ENCODE measurements at regions of chr22 and their contacts with region 1.

Region 1: DNA sequence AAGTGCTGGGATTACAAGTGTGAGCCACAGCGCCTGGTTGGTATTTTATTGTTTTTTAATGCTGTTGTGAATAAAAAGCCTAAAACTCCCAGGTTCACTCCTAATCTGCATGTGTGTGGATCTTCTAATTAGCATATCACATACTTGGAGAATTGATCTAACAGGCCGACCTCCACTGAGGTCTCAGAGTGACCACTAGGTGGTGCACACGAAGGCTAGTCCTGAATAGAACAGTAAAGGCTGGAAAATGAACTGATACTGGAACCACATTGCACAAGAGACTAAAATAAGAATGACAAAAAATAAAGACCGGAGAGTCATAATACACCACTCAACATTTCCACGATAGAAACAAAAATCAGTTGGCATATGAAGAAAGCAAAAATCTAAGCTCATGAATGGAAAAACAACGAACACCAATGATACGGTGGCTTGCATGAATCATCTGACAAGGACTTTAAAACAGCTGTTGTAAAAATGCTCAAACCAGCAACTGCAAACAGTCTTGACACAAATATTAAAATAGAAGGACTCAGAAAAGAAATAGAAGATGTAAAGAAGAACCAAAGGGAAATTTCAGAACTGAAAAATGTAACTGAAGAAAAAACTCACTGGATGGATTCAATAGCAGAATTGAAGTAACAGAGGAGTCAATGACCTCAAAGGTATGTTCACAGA is 19.2 kb downstream of the PIM3 start:
- DNase-seq: peak; percentile 68
- H3K4me3 Mint-ChIP-seq: peak overlapping the region; percentile 42
- H3K27ac Mint-ChIP-seq: peak overlapping the region; percentile 83
- H3K4me1 Mint-ChIP-seq: peaks cover 44% of the 10 kb centered on the region
- H3K27me3 Mint-ChIP-seq: peaks cover 4% of the 10 kb centered on the region

Region 2: DNA sequence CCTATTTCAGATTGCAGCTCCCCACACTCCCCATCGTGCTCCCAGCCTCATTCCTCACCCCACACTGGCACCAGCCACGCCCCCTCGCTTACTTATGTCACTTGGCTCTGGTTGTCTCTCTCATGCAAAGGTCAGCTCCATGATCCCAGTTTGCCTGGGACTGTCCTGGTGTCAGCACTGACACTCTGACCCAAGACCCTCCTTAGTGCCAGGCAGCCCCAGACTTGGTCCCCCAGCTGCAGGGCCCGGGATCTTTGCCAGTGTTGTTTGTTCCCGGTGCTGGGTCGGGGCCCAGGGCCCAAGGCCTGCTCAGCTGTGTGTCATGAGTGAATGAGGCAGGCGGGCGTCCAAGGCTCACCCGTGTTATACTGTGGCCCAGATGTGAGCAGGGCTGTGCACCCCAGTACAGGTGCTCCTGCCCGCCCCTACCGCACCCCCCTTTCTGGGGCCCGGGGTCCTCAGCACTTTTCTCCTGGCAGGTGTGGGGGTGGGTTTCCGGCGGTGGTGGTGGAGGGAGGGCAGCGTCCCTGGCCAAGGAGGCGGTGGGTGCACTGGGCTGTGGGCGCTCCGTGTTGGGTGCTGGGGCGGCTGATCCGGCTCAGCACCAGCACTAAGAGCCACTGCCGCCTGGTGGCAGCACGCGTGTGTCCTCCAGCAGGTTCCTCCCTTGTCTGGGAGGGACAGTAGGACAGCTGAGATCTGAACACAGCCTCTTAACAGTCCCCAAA is 13.4 kb after region 1 on chr22:
- CTCF ChIA-PET with region 1: interaction called, 12 read pairs
- POLR2A ChIA-PET with region 1: no interaction called
- intact Hi-C with region 1: no loop called
- DNase-seq: peak; percentile 83
- H3K4me3 Mint-ChIP-seq: no peak overlapping the region
- H3K27ac Mint-ChIP-seq: peak overlapping the region; percentile 6
- H3K4me1 Mint-ChIP-seq: peaks cover 4% of the 10 kb centered on the region
- H3K27me3 Mint-ChIP-seq: no peaks in the 10 kb centered on the region

Region 3: DNA sequence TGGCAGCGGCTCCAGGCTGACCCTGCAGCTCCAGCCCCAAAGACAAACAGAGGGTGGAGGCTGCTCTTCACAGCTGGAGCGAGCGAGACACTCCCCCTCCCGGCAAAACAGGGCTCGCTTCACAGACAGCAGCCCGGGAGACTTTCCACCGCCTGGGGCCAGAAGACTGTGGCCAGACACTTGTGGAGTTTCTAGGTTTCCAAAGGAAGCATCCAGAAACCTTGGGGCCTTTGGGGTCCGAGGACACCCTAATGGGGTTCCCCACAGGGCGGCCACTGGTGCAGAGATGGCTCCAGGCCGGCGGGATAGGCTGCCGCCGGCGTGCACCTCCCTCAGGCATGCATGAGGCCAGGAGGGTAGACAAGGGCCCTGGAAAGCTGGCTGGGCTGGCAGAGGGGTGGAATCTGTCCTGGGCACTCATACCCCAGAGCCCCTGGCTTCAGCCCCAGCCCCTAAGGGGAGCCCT is 33.0 kb after region 1 on chr22 and contains the start of gene IL17REL:
- CTCF ChIA-PET with region 1: interaction called, 10 read pairs
- POLR2A ChIA-PET with region 1: interaction called, 4 read pairs
- intact Hi-C with region 1: no loop called
- DNase-seq: no peak
- H3K4me3 Mint-ChIP-seq: peak within 1 kb of the TSS; percentile 68
- H3K27ac Mint-ChIP-seq: peak within 1 kb of the TSS; percentile 62
- H3K4me1 Mint-ChIP-seq: peaks cover 18% of the 10 kb centered on the region
- H3K27me3 Mint-ChIP-seq: peaks cover 3% of the 10 kb centered on the region
- total RNA-seq, gene IL17REL: 0.73 to 1.1 TPM

Region 4: GRCh38 chr22:50018608-50019285 is 39.0 kb after region 1 on chr22:
- CTCF ChIA-PET with region 1: interaction called, 10 read pairs
- POLR2A ChIA-PET with region 1: interaction called, 4 read pairs
- intact Hi-C with region 1: loop called (anchors 2 kb)
- DNase-seq: peak; percentile 69
- H3K4me3 Mint-ChIP-seq: peak overlapping the region; percentile 74
- H3K27ac Mint-ChIP-seq: no peak overlapping the region
- H3K4me1 Mint-ChIP-seq: no peaks in the 10 kb centered on the region
- H3K27me3 Mint-ChIP-seq: no peaks in the 10 kb centered on the region